PC-9 (cell line): ENCODE measurements at regions of chr1 and their contacts with region 1.

Region 1: GRCh38 chr1:51622455-51622913 is 5.6 kb downstream of the OSBPL9 start:
- DNase-seq: peak; percentile 87 to 98
- H3K4me3 ChIP-seq: peak overlapping the region; percentile 33; the same call in 1 of the 2 replicates
- H3K27ac ChIP-seq: peak overlapping the region; percentile 96
- H3K4me1 ChIP-seq: peaks cover 63% of the 10 kb centered on the region
- H3K27me3 ChIP-seq: no peaks in the 10 kb centered on the region
- CTCF ChIP-seq: no peak

Region 2: DNA sequence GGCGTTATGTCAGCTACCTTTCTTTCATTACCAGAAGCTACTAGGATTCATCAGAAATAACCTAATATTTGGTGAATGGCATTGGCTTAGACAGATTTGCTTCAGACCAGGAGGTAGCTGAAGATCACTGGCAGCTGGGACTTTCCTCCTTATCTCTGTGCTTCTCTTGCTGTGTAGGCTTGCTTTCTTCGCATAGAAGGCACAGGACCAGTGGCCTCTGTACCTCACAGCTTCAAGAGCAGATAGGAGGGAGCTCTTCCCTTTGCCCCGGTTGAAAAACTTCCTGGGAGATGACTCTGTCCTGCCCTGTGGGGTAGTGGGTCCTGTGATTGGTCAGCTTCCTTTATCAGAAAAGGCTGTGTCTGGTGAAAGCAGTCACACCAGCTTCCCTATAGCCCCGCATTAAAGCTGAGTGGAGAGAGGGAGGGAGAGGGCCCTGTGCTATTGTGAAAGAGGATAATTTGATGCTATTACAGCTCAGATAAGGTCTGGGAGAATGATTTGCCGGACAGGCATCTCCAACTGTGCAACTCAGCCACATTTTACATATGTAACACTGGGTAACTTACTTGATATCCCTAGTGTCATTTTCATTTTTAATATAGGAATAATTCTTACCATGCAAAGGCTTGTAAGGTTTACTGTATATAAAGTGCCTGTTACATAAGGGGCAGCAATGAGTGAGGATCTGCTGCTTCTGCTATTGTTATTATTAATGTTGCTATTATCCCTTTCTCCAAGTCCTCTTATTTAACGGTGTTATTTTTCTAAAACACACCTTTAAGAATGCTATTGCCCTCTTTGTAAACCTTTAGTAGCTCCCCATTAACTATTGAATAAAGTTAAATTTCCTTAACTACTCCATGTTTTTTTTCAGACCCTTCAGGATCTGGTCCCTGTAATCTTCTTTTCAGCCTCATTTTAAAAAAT is 26.0 kb after region 1 on chr1:
- CTCF ChIA-PET with region 1: no interaction called
- POLR2A ChIA-PET with region 1: interaction called, 6 read pairs
- intact Hi-C with region 1: loop called (anchors 2 kb)
- DNase-seq: peak; percentile 75 to 90
- H3K4me3 ChIP-seq: peak overlapping the region; percentile 35
- H3K27ac ChIP-seq: peak overlapping the region; percentile 78
- H3K4me1 ChIP-seq: peaks cover 54% of the 10 kb centered on the region
- H3K27me3 ChIP-seq: no peaks in the 10 kb centered on the region
- CTCF ChIP-seq: no peak

Region 3: DNA sequence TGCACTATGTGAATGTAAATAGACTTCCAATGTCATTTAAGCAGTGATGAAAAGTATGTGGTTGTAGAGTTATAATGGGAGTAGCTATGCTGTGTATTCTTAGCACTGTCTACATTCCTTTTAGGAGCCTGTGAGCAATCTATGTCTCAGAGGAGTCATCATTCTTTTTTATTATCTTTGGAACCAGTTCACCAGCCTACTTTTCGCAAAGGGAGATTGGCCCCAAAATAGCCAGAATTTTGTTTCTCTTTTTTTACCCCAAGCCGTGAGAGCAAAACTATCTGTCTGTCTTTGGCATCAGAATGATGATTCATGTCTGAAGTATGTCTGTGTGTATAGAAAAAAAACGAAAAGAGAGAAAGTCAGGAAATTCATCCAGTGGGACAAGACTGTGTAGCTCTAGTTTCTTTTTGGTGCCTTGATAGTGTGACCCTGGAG is 38.6 kb after region 1 on chr1:
- CTCF ChIA-PET with region 1: no interaction called
- POLR2A ChIA-PET with region 1: interaction called, 8 read pairs
- intact Hi-C with region 1: loop called (anchors 5 kb)
- DNase-seq: peak; percentile 27 to 67
- H3K4me3 ChIP-seq: peak overlapping the region; percentile 19; the same call in 1 of the 2 replicates
- H3K27ac ChIP-seq: peak overlapping the region; percentile 57
- H3K4me1 ChIP-seq: peaks cover 32% of the 10 kb centered on the region
- H3K27me3 ChIP-seq: no peaks in the 10 kb centered on the region
- CTCF ChIP-seq: no peak

Region 4: DNA sequence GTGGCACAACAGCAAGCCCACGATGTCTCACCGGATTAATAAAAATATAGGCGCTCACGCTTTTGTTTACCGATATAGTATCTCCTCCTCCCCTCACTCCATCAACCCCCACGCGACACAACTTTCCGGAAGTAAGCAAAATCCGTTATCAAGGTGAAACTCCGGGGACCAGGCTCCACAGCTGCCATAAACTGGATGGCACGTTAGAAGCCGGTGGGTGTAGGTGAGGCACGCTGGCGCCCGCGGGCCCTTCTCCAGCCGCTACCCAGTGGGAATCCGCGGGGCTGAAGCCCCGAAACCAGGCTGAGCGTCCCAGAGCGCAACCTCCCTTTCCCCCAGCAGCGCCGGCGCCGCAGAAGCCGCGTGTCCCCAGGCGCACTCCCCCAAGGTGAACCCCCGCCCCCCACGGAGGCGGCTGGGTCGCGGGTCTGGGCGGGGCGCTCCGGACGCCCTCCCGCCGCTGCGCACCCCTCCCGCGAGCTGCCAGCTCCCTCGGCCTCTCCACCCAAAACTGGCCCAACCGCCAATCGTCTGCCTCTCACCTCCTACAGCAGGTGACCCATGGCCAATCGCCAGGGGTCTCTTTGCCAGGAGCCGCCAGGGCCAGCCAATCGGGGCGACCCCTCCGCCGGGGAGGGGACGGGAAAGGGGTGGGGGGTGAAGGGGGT is 106.8 kb after region 1 on chr1:
- CTCF ChIA-PET with region 1: no interaction called
- POLR2A ChIA-PET with region 1: interaction called, 4 read pairs
- intact Hi-C with region 1: loop called (anchors 5 kb)
- DNase-seq: peak; percentile 91 to 99
- H3K4me3 ChIP-seq: peak overlapping the region; percentile 60
- H3K27ac ChIP-seq: peak overlapping the region; percentile 66
- H3K4me1 ChIP-seq: peaks cover 48% of the 10 kb centered on the region
- H3K27me3 ChIP-seq: no peaks in the 10 kb centered on the region
- CTCF ChIP-seq: no peak

Region 5: DNA sequence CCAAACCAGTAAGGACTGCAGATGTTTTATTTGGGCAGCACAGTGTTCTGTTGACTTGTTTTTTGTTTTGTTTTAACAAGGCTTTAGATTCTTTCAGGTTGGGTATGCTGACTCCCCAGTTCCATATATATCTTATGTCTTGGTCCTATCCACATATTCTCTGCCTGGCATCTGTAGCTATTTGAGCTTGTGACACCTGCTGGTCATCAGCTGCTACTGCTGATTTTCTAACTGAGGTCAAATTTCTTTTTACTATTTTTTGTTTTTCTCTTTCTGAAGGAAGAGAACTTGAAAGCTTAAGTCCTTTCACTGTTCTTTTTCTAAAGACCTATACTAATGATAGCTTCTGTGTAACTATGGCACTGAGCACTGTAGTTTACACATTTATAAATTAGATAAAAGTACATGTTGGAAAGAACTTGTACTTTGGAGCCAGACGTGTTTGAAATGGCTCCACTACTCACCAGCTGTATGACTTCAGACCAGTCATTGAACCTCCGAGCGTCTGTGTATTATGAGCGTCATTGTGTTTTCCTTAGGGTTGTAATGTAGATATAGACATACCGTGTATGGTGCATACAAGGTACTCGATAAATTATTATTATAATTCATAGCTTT is 146.6 kb after region 1 on chr1:
- CTCF ChIA-PET with region 1: interaction called, 4 read pairs
- POLR2A ChIA-PET with region 1: interaction called, 3 read pairs
- intact Hi-C with region 1: loop called (anchors 5 kb)
- DNase-seq: peak; percentile 33 to 49
- H3K4me3 ChIP-seq: no peak overlapping the region
- H3K27ac ChIP-seq: no peak overlapping the region
- H3K4me1 ChIP-seq: no peaks in the 10 kb centered on the region
- H3K27me3 ChIP-seq: no peaks in the 10 kb centered on the region
- CTCF ChIP-seq: peak; percentile 92